ENCODE measurements at regions of chr12 and their contacts with region 1.

Region 1: GRCh38 chr12:14167005-14167628 is 185.7 kb upstream of the GRIN2B start:
- DNase-seq: no peak
- ATAC-seq: no peak

Region 2: DNA sequence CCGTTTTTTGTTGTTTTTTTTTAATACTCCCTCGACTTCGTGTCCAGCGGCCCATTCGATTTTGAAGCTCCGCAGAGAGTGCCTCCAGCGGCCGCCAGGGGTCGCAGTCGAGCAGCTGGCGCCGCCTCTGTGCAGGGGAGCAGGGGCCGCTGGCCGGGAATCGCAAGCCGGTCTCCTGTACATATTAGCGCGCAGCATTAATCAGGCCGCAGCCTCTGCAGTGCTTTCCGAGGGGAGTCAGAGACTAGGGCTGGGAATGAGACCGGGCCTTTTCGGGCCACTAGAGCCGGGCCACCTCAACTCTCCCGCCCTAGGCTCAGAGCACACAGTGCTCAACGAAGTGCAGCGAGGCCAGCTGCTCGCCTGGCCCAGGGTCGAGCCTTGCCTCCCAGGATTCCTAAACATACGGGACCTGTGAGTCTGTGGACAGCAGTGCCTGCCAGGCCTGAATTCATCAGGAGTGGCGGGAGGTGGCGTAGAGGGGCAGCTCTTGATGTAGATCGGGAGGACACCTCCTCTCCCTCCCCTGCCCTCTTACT is 888.8 kb before region 1 on chr12:
- intact Hi-C with region 1: loop called in 1 of 2 experiments (anchors 5 kb)
- DNase-seq: peak; percentile 77
- ATAC-seq: peak; percentile 95 to 96

Region 3: GRCh38 chr12:13734584-13735152 is 432.4 kb before region 1 on chr12:
- intact Hi-C with region 1: loop called in 1 of 2 experiments (anchors 5 kb)
- DNase-seq: no peak
- ATAC-seq: no peak

Region 4: GRCh38 chr12:13745111-13745685 is 421.9 kb before region 1 on chr12:
- intact Hi-C with region 1: loop called in 1 of 2 experiments (anchors 5 kb)
- DNase-seq: no peak
- ATAC-seq: no peak

Region 5: GRCh38 chr12:13764748-13765147 is 402.4 kb before region 1 on chr12:
- intact Hi-C with region 1: no loop called
- DNase-seq: no peak
- ATAC-seq: no peak

Region 6: GRCh38 chr12:13864081-13864673 is 302.9 kb before region 1 on chr12:
- intact Hi-C with region 1: loop called (anchors 2 to 5 kb)
- DNase-seq: peak; percentile 84
- ATAC-seq: peak; percentile 77 to 84

Measured in left cardiac atrium (tissue), 4 donors.